Heart left ventricle (tissue), 16 donors: ENCODE measurements at regions of chr7 and their contacts with region 1.

Region 1: GRCh38 chr7:42479816-42480633 is 243.0 kb upstream of the GLI3 start:
- DNase-seq: peak in 1 of 5 donors; percentile 29
- ATAC-seq: peak; percentile 65 to 89 (median 79)
- H3K4me3 ChIP-seq: no peak overlapping the region
- H3K27ac ChIP-seq: peak overlapping the region in 8 of 12 donors; percentile 3 to 69 (median 42)
- H3K4me1 ChIP-seq: peaks cover 0 to 15% (median 0%) of the 10 kb centered on the region in 12 donors
- H3K27me3 ChIP-seq: no peaks in the 10 kb centered on the region
- CTCF ChIP-seq: no peak
- POLR2A ChIP-seq: no peak

Region 2: GRCh38 chr7:42237162-42237821 is 242.7 kb before region 1 on chr7 and contains the start of gene GLI3:
- intact Hi-C with region 1: loop called in 1 of 10 experiments (anchors 10 kb)
- DNase-seq: peak; percentile 88 to 89 (median 89)
- ATAC-seq: peak; percentile 85 to 90 (median 90)
- H3K4me3 ChIP-seq: peak within 1 kb of the TSS; percentile 42 to 95 (median 79)
- H3K27ac ChIP-seq: peak within 1 kb of the TSS; percentile 64 to 95 (median 86)
- H3K4me1 ChIP-seq: peaks cover 0 to 16% (median 8%) of the 10 kb centered on the region in 12 donors
- H3K27me3 ChIP-seq: peaks cover 0 to 40% (median 0%) of the 10 kb centered on the region in 9 donors
- CTCF ChIP-seq: peak in 7 of 12 donors; percentile 6 to 56 (median 27)
- POLR2A ChIP-seq: peak in 1 of 2 donors; percentile 41
- total RNA-seq, gene GLI3: 2.0 to 14.4 (median 6.4) TPM

Region 3: DNA sequence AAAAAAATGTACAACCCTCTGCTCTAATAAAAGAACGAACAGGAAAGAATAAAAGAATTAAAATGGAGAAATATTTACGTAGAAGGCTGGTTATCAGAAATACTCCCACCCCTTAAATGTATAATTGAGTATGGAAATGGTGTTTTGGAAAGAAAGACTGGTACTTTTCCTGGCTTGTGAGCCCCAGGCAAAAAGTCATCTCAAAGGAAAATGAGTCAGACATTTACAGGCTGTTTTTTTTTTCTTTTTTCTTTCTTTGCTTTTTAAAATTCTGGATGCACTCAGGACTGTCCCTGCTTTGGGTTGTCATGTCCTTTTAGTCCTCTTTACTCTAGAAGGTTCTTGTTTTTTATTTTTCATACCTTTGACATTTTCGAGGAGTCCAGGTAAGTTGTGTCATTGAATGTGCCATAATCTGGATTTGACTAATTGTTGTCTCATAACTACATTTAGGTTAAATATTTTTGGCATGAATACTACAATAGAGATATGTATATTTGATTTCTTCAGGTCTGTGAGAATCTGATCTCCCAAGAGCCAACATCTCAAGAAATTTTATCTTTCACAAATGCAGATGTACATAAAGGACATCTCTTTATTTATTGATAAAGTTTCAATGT is 70.0 kb after region 1 on chr7:
- intact Hi-C with region 1: loop called in 1 of 10 experiments (anchors 10 kb)
- DNase-seq: no peak
- ATAC-seq: no peak
- H3K4me3 ChIP-seq: no peak overlapping the region
- H3K27ac ChIP-seq: no peak overlapping the region
- H3K4me1 ChIP-seq: no peaks in the 10 kb centered on the region
- H3K27me3 ChIP-seq: no peaks in the 10 kb centered on the region
- CTCF ChIP-seq: no peak
- POLR2A ChIP-seq: no peak

Region 4: DNA sequence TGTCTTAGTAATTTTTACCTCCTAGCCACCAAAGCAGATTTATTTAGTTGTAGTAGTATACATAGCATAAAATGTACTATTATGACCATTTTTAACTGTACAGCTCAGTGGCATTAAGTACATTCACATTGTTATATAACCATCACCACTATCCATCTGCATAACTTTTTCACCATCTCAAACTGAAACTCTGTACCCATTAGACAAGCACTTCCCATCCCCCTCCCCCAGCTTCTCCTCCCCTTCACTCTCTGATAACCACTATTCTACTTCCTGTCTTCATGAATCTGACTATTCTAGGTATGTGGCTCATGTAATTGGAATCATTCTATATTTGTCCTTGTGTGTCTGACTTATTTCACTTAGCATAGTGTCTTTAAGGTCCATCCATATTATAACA is 524.1 kb after region 1 on chr7:
- intact Hi-C with region 1: no loop called
- DNase-seq: no peak
- ATAC-seq: no peak
- H3K4me3 ChIP-seq: no peak overlapping the region
- H3K27ac ChIP-seq: no peak overlapping the region
- H3K4me1 ChIP-seq: no peaks in the 10 kb centered on the region
- H3K27me3 ChIP-seq: peaks cover 0 to 3% (median 0%) of the 10 kb centered on the region in 9 donors
- CTCF ChIP-seq: no peak
- POLR2A ChIP-seq: no peak